Activated T-helper 2 cell treated with anti-CD3 and anti-CD28 coated beads, Interferon-gamma antibody, Interleukin-2, Interleukin-4, amounts not matched to agents 10 μg/mL and 5 μg/mL and 100 μg/mL, durations not matched to agents 14 hours and 24 hours and 36 hours (primary cell): ENCODE measurements at regions of chr5 and their contacts with region 1.

Region 1: DNA sequence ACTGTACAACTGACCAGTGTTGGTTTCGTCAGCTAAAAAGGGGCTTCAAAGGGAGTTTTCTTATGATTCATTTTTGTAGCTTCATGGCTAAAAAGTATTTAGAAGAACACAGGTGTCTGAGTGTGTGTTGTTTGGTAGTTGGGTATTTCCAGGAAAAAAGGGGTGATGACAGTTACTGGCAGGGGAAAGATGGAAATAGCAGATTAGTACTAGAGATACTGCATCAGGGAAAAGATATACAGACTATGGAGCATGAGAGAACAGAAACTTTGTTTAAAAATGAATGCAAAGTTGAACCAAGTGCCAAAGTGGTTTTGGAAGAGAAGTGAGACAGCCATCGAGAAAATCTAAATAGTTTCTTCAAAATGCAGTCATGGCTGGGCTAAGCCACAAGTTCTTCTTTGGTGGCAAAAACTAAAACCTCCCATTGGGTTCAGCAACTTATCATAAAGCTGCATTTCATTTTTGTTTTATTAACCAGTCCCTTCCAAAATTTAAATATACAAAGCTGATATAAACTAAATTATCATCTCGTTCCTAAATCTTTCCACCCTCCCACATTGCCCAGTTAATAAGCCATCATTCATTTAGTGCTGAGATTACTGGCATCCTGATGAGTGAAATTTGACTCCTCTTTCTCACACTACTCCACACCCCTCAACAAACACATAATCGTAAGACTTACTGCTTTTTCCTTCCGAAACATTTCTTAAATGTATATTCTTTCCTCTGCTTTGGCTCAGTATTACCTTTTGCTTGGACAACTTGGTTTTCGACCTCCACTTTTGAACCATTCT is 33.5 kb downstream of the ELL2 start:
- DNase-seq: no peak
- H3K4me3 Mint-ChIP-seq: peak overlapping the region; percentile 5
- H3K27ac Mint-ChIP-seq: peak overlapping the region; percentile 85
- H3K4me1 Mint-ChIP-seq: peaks cover 64% of the 10 kb centered on the region
- H3K27me3 Mint-ChIP-seq: no peaks in the 10 kb centered on the region

Region 2: DNA sequence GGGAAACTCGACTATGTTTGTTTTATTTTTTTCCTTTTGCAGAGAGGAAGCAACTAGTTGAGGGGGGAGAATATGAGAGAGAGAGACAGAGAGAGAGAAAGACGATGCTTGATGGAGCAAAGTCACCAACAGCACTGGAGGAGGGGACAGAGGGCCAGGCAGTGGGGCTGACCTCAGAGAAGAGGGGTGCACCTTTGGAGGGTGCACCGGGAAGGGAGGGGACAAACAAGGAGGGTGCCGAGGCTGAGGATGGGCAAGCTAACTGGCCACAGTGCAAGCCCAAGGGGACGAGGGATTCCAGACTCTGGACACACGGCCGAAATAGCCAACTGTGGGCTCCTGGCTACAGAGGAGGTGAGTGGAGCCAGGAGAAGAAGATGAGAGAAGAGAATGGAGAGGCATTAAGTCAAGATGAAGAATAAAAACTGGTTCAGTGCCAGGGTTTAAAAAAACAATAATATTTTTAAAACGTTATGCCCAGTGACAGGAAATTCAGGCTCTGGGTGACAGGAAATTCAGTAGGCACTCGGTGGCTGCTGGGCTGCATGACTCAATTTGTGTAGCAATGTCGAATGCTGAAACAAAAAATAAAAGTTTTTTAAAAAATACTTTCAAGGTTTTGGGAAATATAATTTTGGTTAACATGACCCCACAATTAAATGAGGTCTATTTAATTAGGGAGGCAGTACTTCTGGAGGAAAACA is 92.3 kb before region 1 on chr5:
- intact Hi-C with region 1: no loop called
- DNase-seq: no peak
- H3K4me3 Mint-ChIP-seq: peak overlapping the region; percentile 72
- H3K27ac Mint-ChIP-seq: peak overlapping the region; percentile 43
- H3K4me1 Mint-ChIP-seq: peaks cover 39% of the 10 kb centered on the region
- H3K27me3 Mint-ChIP-seq: no peaks in the 10 kb centered on the region

Region 3: DNA sequence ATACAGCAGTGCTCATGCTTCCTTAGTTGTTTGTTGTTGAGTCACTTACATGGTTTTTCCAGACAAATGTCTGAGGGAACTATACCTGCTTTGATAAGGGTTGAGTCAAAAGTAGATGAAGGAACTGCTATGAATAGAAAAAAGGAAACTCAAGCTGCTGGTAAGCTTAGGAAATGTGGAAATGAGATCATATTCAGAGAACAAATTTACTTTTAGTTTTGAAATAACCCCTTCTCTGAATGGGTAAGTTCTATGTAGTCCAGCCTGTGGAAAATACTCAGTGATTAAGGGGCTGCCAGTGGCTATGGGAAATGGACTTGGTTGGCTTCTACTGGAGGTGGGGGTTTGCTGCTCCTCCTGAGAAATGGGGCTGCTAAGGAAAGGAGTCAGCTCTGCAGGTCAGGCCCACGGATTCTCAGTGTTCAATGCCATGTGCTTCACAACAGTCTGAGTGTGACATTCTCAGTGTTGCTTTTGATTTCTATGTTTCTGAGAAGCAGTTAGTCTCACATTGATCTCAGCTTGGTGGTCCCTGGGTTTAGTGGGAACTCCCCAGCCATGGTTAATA is 57.9 kb before region 1 on chr5:
- intact Hi-C with region 1: loop called (anchors 1 kb)
- DNase-seq: peak; percentile 28
- H3K4me3 Mint-ChIP-seq: peak overlapping the region; percentile 37
- H3K27ac Mint-ChIP-seq: peak overlapping the region; percentile 89
- H3K4me1 Mint-ChIP-seq: peaks cover 45% of the 10 kb centered on the region
- H3K27me3 Mint-ChIP-seq: peaks cover 4% of the 10 kb centered on the region

Region 4: GRCh38 chr5:95916687-95917085 is 11.4 kb before region 1 on chr5:
- intact Hi-C with region 1: loop called (anchors 1 kb)
- DNase-seq: no peak
- H3K4me3 Mint-ChIP-seq: no peak overlapping the region
- H3K27ac Mint-ChIP-seq: no peak overlapping the region
- H3K4me1 Mint-ChIP-seq: peaks cover 37% of the 10 kb centered on the region
- H3K27me3 Mint-ChIP-seq: no peaks in the 10 kb centered on the region